SK-N-SH (cell line): ENCODE measurements at regions of chr10 and their contacts with region 1.

Region 1: GRCh38 chr10:26612151-26612915 is 85.2 kb upstream of the PDSS1 start:
- DNase-seq: no peak
- H3K4me3 ChIP-seq: no peak overlapping the region
- H3K27ac ChIP-seq: no peak overlapping the region
- H3K4me1 ChIP-seq: no peaks in the 10 kb centered on the region
- H3K27me3 ChIP-seq: no peaks in the 10 kb centered on the region; the same call in 1 of the 2 replicates
- CTCF ChIP-seq: no peak
- EP300 ChIP-seq: no peak
- RAD21 ChIP-seq: no peak

Region 2: DNA sequence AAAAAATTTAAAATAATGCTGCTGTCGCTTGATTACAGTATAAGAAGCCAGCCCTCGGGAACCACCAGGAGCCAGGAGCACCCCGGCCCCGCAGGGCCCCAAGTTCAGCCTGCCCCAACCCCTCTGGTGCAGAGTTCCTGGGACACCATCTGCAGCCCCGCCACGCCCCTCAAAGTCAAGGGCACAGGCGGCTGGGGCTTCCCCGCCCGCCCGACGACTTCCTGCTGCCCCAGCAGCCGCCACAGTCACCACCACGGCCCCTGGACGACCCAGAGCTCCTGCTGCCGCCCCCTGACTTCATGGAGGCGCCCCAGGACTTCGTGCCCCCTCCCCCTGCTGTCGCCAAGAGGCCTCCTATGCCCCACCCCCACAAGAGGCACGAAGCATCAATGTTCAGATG is 18.4 kb before region 1 on chr10:
- CTCF ChIA-PET with region 1: interaction called, 11 read pairs
- POLR2A ChIA-PET with region 1: no interaction called
- DNase-seq: peak; percentile 21
- H3K4me3 ChIP-seq: no peak overlapping the region
- H3K27ac ChIP-seq: no peak overlapping the region
- H3K4me1 ChIP-seq: no peaks in the 10 kb centered on the region
- H3K27me3 ChIP-seq: no peaks in the 10 kb centered on the region; the same call in 1 of the 2 replicates
- CTCF ChIP-seq: no peak
- EP300 ChIP-seq: no peak
- RAD21 ChIP-seq: no peak